Calu3 (cell line): ENCODE measurements at regions of chr1 and their contacts with region 1.

Region 1: GRCh38 chr1:113389953-113390834 is at the start of gene MAGI3:
- DNase-seq: peak; percentile 96
- H3K4me3 Mint-ChIP-seq: peak within 1 kb of the TSS; percentile 88
- H3K27ac Mint-ChIP-seq: peak within 1 kb of the TSS; percentile 93
- H3K4me1 Mint-ChIP-seq: peaks cover 17% of the 10 kb centered on the region
- H3K27me3 Mint-ChIP-seq: no peaks in the 10 kb centered on the region
- CTCF ChIP-seq: no peak
- total RNA-seq, gene MAGI3: 13.4 and 14.2 TPM in 2 replicates

Region 2: DNA sequence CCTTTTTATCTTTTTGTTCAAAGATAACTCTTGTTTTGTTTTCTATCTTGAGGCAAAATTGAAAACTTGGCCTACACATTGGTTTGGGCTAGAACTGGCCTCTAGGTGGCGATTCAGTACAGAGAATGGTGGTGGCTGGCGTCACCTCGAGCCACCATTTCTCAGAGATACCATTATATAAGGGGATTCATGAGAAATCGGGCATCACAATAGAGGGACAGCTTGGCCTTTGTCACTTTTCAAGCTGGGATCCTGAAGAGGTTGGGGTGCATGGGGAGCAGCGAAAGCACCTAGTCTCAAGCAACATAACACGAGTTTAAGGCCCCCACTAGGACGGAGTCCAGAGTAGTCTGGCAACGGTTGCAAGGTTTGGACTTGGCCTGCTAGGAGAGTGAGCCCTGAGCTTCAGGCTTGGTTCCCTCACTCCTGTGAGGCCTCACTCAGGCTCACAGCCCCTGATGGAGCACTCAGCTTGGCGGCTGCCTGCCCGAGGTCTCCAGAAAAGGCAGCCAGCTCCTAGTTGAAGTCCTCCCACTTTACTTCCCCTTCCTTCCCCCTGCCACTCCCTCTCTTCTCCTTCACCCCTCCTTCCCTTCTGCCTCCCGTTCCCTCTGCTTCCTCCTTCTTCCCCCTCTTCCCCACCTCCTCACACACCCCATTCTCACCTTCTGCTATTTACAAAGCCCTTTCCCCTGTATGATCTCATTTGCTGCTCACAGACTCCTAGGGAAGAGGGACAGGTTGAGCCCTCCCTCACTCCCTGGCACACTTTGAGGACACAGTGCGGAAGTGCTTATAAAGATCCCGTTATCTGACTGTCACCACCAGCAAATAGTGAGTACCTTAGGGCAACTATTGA is 249.4 kb before region 1 on chr1:
- CTCF ChIA-PET with region 1: interaction called, 4 read pairs
- intact Hi-C with region 1: loop called (anchors 2 kb)
- DNase-seq: peak; percentile 56
- H3K4me3 Mint-ChIP-seq: no peak overlapping the region
- H3K27ac Mint-ChIP-seq: no peak overlapping the region
- H3K4me1 Mint-ChIP-seq: peaks cover 13% of the 10 kb centered on the region
- H3K27me3 Mint-ChIP-seq: no peaks in the 10 kb centered on the region
- CTCF ChIP-seq: peak; percentile 68

Region 3: DNA sequence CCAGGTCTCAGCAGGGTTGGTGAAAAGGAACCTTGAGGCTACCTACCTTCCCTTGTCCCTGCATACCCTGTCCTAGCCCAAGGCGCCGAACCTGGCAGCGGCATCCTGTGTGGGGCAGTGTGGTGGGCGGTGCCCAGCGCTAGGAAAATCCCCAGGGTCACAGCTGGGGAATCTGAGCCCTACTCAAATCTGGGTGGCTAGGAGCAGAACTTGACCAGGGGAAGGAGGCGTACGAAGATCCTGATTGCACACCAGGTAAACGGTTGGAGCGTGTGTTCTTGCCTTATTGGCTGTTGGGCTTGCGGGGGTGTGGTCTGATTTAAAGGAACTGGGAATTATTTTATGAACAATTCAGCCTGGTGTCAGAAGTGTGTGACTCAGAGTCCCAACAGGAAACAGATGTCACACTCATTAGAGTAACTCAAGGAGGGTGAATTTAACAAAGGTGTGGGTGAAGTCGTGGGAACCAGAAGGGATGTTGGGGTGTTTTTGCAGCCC is 198.6 kb before region 1 on chr1:
- CTCF ChIA-PET with region 1: no interaction called
- intact Hi-C with region 1: loop called (anchors 1 kb)
- DNase-seq: peak; percentile 78
- H3K4me3 Mint-ChIP-seq: peak overlapping the region; percentile 30
- H3K27ac Mint-ChIP-seq: peak overlapping the region; percentile 97
- H3K4me1 Mint-ChIP-seq: peaks cover 18% of the 10 kb centered on the region
- H3K27me3 Mint-ChIP-seq: no peaks in the 10 kb centered on the region
- CTCF ChIP-seq: no peak

Region 4: GRCh38 chr1:113275691-113276090 is 114.5 kb before region 1 on chr1:
- CTCF ChIA-PET with region 1: no interaction called
- intact Hi-C with region 1: no loop called
- DNase-seq: no peak
- H3K4me3 Mint-ChIP-seq: no peak overlapping the region
- H3K27ac Mint-ChIP-seq: no peak overlapping the region
- H3K4me1 Mint-ChIP-seq: no peaks in the 10 kb centered on the region
- H3K27me3 Mint-ChIP-seq: no peaks in the 10 kb centered on the region
- CTCF ChIP-seq: no peak

Region 5: DNA sequence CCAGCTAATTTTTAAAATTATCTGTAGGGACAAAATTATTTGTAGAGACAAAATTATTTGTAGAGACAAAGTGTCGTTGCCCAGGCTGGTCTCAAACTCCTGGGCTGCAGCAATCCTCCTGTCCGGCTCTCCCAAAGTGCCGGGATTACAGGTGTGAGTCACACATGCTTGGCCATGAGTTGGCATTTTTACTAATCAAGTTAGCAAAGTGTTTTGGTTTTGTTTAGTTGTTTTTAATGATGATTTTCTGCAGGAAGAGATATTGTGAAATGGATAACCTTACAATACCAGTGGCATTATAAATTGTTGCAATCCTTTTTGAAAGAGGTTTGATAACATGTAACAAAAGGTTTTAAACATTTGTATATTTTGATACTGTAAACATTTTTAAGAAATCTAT is 65.2 kb before region 1 on chr1:
- CTCF ChIA-PET with region 1: no interaction called
- intact Hi-C with region 1: loop called (anchors 2 kb)
- DNase-seq: peak; percentile 47
- H3K4me3 Mint-ChIP-seq: no peak overlapping the region
- H3K27ac Mint-ChIP-seq: peak overlapping the region; percentile 48
- H3K4me1 Mint-ChIP-seq: peaks cover 17% of the 10 kb centered on the region
- H3K27me3 Mint-ChIP-seq: no peaks in the 10 kb centered on the region
- CTCF ChIP-seq: no peak

Region 6: DNA sequence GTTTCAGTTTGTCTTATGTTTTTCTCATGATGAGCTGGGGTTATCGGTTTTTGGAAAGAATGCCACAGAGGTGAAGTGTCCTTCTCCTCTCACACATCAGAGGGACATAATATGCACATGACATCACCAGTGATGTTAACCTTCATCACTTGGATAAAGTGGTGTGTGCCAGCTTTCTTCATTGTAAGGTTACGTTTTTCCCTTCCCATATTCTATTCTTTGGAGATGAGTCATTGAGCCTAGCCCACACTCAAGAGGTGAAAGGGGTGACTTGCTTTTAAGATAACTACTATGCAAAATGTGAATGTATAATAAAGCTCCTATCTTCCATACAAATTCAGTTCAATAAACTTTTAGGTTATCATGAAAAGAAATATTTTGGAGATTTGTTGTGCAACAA is 36.6 kb before region 1 on chr1:
- CTCF ChIA-PET with region 1: no interaction called
- intact Hi-C with region 1: no loop called
- DNase-seq: no peak
- H3K4me3 Mint-ChIP-seq: no peak overlapping the region
- H3K27ac Mint-ChIP-seq: no peak overlapping the region
- H3K4me1 Mint-ChIP-seq: no peaks in the 10 kb centered on the region
- H3K27me3 Mint-ChIP-seq: no peaks in the 10 kb centered on the region
- CTCF ChIP-seq: no peak

Region 7: GRCh38 chr1:113452921-113453770 is 63.0 kb after region 1 on chr1:
- CTCF ChIA-PET with region 1: interaction called, 6 read pairs
- intact Hi-C with region 1: loop called (anchors 1 kb)
- DNase-seq: no peak
- H3K4me3 Mint-ChIP-seq: no peak overlapping the region
- H3K27ac Mint-ChIP-seq: no peak overlapping the region
- H3K4me1 Mint-ChIP-seq: peaks cover 41% of the 10 kb centered on the region
- H3K27me3 Mint-ChIP-seq: no peaks in the 10 kb centered on the region
- CTCF ChIP-seq: no peak